ENCODE measurements at regions of chr18 and their contacts with region 1.

Region 1: GRCh38 chr18:21391074-21391673 is 149.1 kb downstream of the GREB1L start:
- DNase-seq: no peak
- ATAC-seq: no peak
- H3K4me3 ChIP-seq: no peak overlapping the region
- H3K27ac ChIP-seq: no peak overlapping the region
- H3K4me1 ChIP-seq: peaks cover 0 to 3% of the 10 kb centered on the region in 2 donors
- H3K27me3 ChIP-seq: no peaks in the 10 kb centered on the region

Region 2: DNA sequence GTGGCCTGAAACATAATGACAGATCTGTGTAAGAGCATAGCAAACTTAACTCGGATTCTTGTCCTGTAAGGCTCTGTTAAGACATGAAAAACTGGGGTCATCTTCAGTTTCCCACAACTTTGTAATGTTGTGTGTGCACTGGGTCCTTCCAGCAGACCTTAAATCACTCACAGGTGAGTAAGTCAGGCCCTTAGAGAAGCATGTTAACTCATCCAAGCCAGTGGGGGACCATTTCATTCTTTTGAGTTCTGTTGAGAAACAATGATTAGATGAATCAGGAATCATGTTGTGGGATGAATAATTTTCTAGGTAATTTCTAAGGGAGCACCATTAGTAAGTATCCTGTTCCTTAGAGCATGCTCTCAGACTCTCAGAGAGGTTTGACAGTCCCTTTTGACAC is 42.3 kb after region 1 on chr18:
- intact Hi-C with region 1: loop called in 1 of 2 experiments (anchors 5 kb)
- DNase-seq: no peak
- ATAC-seq: no peak
- H3K4me3 ChIP-seq: no peak overlapping the region
- H3K27ac ChIP-seq: no peak overlapping the region
- H3K4me1 ChIP-seq: no peaks in the 10 kb centered on the region
- H3K27me3 ChIP-seq: no peaks in the 10 kb centered on the region

Measured in aorta (tissue), 5 donors.